ENCODE measurements at regions of chr12 and their contacts with region 1.

Region 1: GRCh38 chr12:13534645-13535398 is 338.3 kb downstream of the EMP1 start:
- DNase-seq: no peak
- ATAC-seq: peak; percentile 35
- H3K4me3 ChIP-seq: no peak overlapping the region
- H3K27ac ChIP-seq: no peak overlapping the region
- H3K4me1 ChIP-seq: peaks cover 21% of the 10 kb centered on the region
- H3K27me3 ChIP-seq: peaks cover 0 to 3% of the 10 kb centered on the region in 2 experiments; a peak in 1 of 4 replicates
- CTCF ChIP-seq: peak; percentile 64 to 95 (median 89)
- EP300 ChIP-seq: no peak
- POLR2A ChIP-seq: no peak
- RAD21 ChIP-seq: peak; percentile 65

Region 2: DNA sequence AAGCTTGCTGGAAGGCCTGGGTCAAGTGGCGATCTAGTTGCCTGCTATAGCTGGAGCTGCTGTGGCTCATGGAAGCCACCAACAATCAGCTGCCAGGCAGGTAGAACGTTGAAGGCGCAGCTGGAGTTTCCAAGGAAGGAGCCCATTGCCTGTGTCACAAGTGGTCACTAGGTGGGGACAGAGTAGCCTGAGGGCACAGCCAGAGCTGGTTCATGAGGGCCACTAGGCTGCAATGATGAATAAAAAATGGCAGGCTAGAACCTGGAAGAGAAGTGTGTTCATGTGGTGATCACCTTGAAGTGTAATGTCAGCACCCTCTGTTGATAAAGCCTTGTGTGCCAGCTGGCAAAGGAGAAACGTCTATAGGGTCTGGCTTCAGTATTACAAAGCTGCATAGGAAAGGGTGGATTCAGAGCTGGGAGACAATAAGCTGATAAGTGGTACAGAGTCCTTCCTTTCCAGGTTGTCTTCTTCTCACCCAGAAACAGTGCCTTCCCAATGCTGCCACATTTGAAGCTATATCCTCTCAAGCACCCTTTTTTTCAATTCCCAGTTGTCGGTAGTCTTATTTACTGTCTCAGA is 172.5 kb before region 1 on chr12:
- CTCF ChIA-PET with region 1: interaction called, 36 read pairs
- POLR2A ChIA-PET with region 1: no interaction called
- RAD21 ChIA-PET with region 1: interaction called, 35 read pairs
- SMC1A ChIA-PET with region 1: interaction called, 24 read pairs
- in situ Hi-C with region 1: no loop called
- intact Hi-C with region 1: loop called (anchors 2 kb)
- DNase-seq: no peak
- ATAC-seq: peak; percentile 100
- H3K4me3 ChIP-seq: no peak overlapping the region
- H3K27ac ChIP-seq: no peak overlapping the region
- H3K4me1 ChIP-seq: no peaks in the 10 kb centered on the region
- H3K27me3 ChIP-seq: peaks cover 0 to 3% of the 10 kb centered on the region in 2 experiments; a peak in 1 of 4 replicates
- CTCF ChIP-seq: peak; percentile 71 to 94 (median 91)
- EP300 ChIP-seq: no peak
- POLR2A ChIP-seq: no peak
- RAD21 ChIP-seq: peak; percentile 80

Region 3: GRCh38 chr12:13472690-13473089 is 62.1 kb before region 1 on chr12:
- CTCF ChIA-PET with region 1: interaction called, 18 read pairs
- POLR2A ChIA-PET with region 1: no interaction called
- RAD21 ChIA-PET with region 1: interaction called, 7 read pairs
- SMC1A ChIA-PET with region 1: interaction called, 7 read pairs
- in situ Hi-C with region 1: no loop called
- intact Hi-C with region 1: no loop called
- DNase-seq: peak; percentile 65
- ATAC-seq: peak; percentile 96
- H3K4me3 ChIP-seq: no peak overlapping the region
- H3K27ac ChIP-seq: peak overlapping the region; percentile 68
- H3K4me1 ChIP-seq: peaks cover 13% of the 10 kb centered on the region
- H3K27me3 ChIP-seq: no peaks in the 10 kb centered on the region
- CTCF ChIP-seq: no peak
- EP300 ChIP-seq: peak in 1 of 2 experiments; percentile 72; a peak in 1 of 4 replicates
- POLR2A ChIP-seq: no peak
- RAD21 ChIP-seq: no peak

Region 4: GRCh38 chr12:13523536-13524307 is 11.1 kb before region 1 on chr12:
- CTCF ChIA-PET with region 1: interaction called, 12 read pairs
- POLR2A ChIA-PET with region 1: no interaction called
- RAD21 ChIA-PET with region 1: no interaction called
- SMC1A ChIA-PET with region 1: interaction called, 6 read pairs
- in situ Hi-C with region 1: no loop called
- intact Hi-C with region 1: no loop called
- DNase-seq: no peak
- ATAC-seq: no peak
- H3K4me3 ChIP-seq: no peak overlapping the region
- H3K27ac ChIP-seq: no peak overlapping the region
- H3K4me1 ChIP-seq: no peaks in the 10 kb centered on the region
- H3K27me3 ChIP-seq: no peaks in the 10 kb centered on the region
- CTCF ChIP-seq: no peak
- EP300 ChIP-seq: no peak
- POLR2A ChIP-seq: no peak
- RAD21 ChIP-seq: no peak

Region 5: DNA sequence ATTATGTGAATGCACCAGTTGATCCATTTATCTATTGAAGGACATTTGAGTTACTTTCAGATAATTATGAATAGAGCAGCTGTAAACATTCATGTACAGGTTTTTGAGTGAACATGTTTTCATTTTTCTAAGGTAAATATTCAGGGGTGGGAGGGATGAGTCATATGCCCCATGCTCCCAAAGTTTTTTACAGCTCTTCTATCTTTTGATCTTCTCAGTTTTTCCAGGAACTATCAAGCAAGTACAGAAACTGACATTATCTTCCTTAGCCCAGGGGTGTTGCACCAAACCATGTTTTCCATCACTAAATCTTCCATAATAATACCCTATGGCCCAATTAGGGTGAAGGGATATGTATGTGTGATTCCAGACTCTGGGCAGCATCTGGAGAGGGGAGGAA is 46.2 kb after region 1 on chr12:
- CTCF ChIA-PET with region 1: interaction called, 25 read pairs
- POLR2A ChIA-PET with region 1: no interaction called
- RAD21 ChIA-PET with region 1: interaction called, 4 read pairs
- SMC1A ChIA-PET with region 1: interaction called, 5 read pairs
- in situ Hi-C with region 1: no loop called
- intact Hi-C with region 1: no loop called
- DNase-seq: no peak
- ATAC-seq: no peak
- H3K4me3 ChIP-seq: no peak overlapping the region
- H3K27ac ChIP-seq: no peak overlapping the region
- H3K4me1 ChIP-seq: no peaks in the 10 kb centered on the region
- H3K27me3 ChIP-seq: peaks cover 0 to 4% of the 10 kb centered on the region in 2 experiments; a peak in 1 of 4 replicates
- CTCF ChIP-seq: no peak
- EP300 ChIP-seq: no peak
- POLR2A ChIP-seq: no peak
- RAD21 ChIP-seq: no peak

Region 6: GRCh38 chr12:13631873-13632272 is 97.1 kb after region 1 on chr12:
- CTCF ChIA-PET with region 1: interaction called, 7 read pairs
- POLR2A ChIA-PET with region 1: no interaction called
- RAD21 ChIA-PET with region 1: no interaction called
- SMC1A ChIA-PET with region 1: interaction called, 8 read pairs
- in situ Hi-C with region 1: no loop called
- intact Hi-C with region 1: loop called (anchors 2 kb)
- DNase-seq: peak; percentile 65
- ATAC-seq: peak; percentile 88
- H3K4me3 ChIP-seq: no peak overlapping the region
- H3K27ac ChIP-seq: no peak overlapping the region
- H3K4me1 ChIP-seq: no peaks in the 10 kb centered on the region
- H3K27me3 ChIP-seq: no peaks in the 10 kb centered on the region
- CTCF ChIP-seq: no peak
- EP300 ChIP-seq: peak; percentile 72 to 74; a peak in 3 of 4 replicates
- POLR2A ChIP-seq: no peak
- RAD21 ChIP-seq: no peak

Region 7: DNA sequence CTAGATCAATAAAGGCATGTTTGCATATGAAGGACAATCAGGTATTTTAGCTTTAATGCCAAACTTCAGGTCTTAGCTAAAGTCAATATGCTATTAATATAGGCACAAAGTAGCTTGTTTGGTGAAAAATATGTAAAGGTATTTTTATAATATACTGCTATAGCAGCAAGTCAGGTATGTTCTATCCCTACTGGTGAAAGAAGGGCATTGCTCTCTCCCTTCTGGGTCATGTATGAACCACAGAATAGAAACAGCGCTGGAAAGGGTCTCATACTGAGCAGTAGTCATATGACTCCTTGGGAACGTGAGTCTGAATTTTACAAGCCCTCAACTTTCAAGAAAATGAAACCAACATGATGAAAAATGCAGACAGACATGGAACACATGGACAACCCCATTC is 132.0 kb after region 1 on chr12:
- CTCF ChIA-PET with region 1: interaction called, 66 read pairs
- POLR2A ChIA-PET with region 1: no interaction called
- RAD21 ChIA-PET with region 1: interaction called, 29 read pairs
- SMC1A ChIA-PET with region 1: interaction called, 33 read pairs
- in situ Hi-C with region 1: no loop called
- intact Hi-C with region 1: no loop called
- DNase-seq: no peak
- ATAC-seq: peak; percentile 74
- H3K4me3 ChIP-seq: no peak overlapping the region
- H3K27ac ChIP-seq: no peak overlapping the region
- H3K4me1 ChIP-seq: no peaks in the 10 kb centered on the region
- H3K27me3 ChIP-seq: no peaks in the 10 kb centered on the region; a peak in 2 of 4 replicates
- CTCF ChIP-seq: peak in 2 of 3 experiments; percentile 24 to 39; a peak in 2 of 6 replicates
- EP300 ChIP-seq: no peak
- POLR2A ChIP-seq: no peak
- RAD21 ChIP-seq: no peak

Region 8: DNA sequence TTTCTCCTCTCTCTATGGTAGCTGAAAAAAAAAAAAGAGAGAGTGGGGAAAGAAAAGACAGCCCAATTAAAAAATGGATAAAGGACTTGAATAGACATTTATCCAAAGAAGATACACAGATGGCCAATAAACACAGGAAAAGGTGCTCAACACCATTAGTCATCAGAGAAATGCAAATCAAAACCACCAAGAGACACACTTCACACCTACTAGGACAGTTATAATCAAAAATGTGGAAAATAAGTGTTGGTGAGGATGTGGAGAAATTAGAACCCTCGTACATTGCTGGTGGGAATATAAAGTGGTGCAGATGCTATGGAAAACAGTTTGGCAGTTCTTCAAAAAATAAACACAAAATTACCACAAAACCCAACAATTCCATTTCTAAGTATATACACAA is 619.0 kb after region 1 on chr12:
- CTCF ChIA-PET with region 1: no interaction called
- POLR2A ChIA-PET with region 1: no interaction called
- RAD21 ChIA-PET with region 1: no interaction called
- SMC1A ChIA-PET with region 1: no interaction called
- in situ Hi-C with region 1: no loop called
- intact Hi-C with region 1: no loop called
- DNase-seq: peak; percentile 31
- ATAC-seq: peak; percentile 21
- H3K4me3 ChIP-seq: no peak overlapping the region
- H3K27ac ChIP-seq: peak overlapping the region; percentile 11; the same call in 1 of the 2 replicates
- H3K4me1 ChIP-seq: peaks cover 44% of the 10 kb centered on the region
- H3K27me3 ChIP-seq: no peaks in the 10 kb centered on the region
- CTCF ChIP-seq: no peak
- EP300 ChIP-seq: 0 out of 4 replicates have a peak, but pooled peaks of 1 of the 2 experiments have one; percentile 54
- POLR2A ChIP-seq: no peak
- RAD21 ChIP-seq: no peak